MCF 10A (cell line): ENCODE measurements at regions of chr7 and their contacts with region 1.

Region 1: DNA sequence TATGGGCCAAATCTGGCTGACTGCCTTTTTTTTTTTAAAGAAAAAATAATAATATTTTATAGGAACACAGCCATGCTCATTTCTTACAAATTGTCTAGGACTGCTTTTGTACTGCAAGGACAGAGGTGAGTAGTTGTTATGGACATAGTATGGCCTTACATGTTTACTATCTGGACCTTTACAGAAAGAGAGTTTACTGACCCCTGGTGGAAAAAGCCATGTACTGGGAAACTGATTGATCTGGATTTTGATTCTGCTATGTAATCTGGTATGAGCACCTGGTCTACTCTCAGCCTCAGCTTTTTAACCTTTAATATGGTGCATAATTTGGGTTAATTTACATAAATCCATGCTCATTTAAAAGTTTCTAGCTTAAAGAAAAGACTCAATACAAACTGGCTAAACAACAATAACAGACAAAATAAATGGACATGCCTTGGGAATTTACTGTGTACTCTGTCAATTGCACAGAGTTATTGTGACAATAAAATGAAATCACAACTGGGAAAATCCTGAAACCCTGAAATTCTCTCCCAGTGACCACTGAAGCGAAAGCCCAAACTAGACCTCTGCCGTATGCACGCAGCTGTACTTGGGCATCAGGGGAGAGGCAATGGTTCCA is 260.7 kb downstream of the BMPER start:
- DNase-seq: peak; percentile 62
- H3K4me3 Mint-ChIP-seq: no peak overlapping the region
- H3K27ac Mint-ChIP-seq: no peak overlapping the region
- H3K4me1 Mint-ChIP-seq: no peaks in the 10 kb centered on the region
- H3K27me3 Mint-ChIP-seq: no peaks in the 10 kb centered on the region
- CTCF ChIP-seq: peak; percentile 56

Region 2: GRCh38 chr7:33185786-33186185 is 980.3 kb before region 1 on chr7:
- CTCF ChIA-PET with region 1: no interaction called
- POLR2A ChIA-PET with region 1: no interaction called
- intact Hi-C with region 1: loop called (anchors 5 kb)
- DNase-seq: peak; percentile 57
- H3K4me3 Mint-ChIP-seq: no peak overlapping the region
- H3K27ac Mint-ChIP-seq: no peak overlapping the region
- H3K4me1 Mint-ChIP-seq: no peaks in the 10 kb centered on the region
- H3K27me3 Mint-ChIP-seq: no peaks in the 10 kb centered on the region
- CTCF ChIP-seq: peak; percentile 61

Region 3: GRCh38 chr7:34155220-34155908 is 10.7 kb before region 1 on chr7:
- CTCF ChIA-PET with region 1: interaction called, 20 read pairs
- POLR2A ChIA-PET with region 1: no interaction called
- intact Hi-C with region 1: no loop called
- DNase-seq: peak; percentile 95
- H3K4me3 Mint-ChIP-seq: no peak overlapping the region
- H3K27ac Mint-ChIP-seq: no peak overlapping the region
- H3K4me1 Mint-ChIP-seq: peaks cover 7% of the 10 kb centered on the region
- H3K27me3 Mint-ChIP-seq: no peaks in the 10 kb centered on the region
- CTCF ChIP-seq: no peak